Heart right ventricle (tissue), 16 donors: ENCODE measurements at regions of chr13 and their contacts with region 1.

Region 1: GRCh38 chr13:62626771-62627170 is 1211.1 kb upstream of the PCDH20 start:
- DNase-seq: no peak
- ATAC-seq: no peak
- H3K4me3 ChIP-seq: no peak overlapping the region
- H3K27ac ChIP-seq: no peak overlapping the region
- H3K4me1 ChIP-seq: no peaks in the 10 kb centered on the region
- H3K27me3 ChIP-seq: no peaks in the 10 kb centered on the region
- CTCF ChIP-seq: no peak

Region 2: GRCh38 chr13:62280590-62280989 is 346.2 kb before region 1 on chr13:
- intact Hi-C with region 1: no loop called
- DNase-seq: no peak
- ATAC-seq: no peak
- H3K4me3 ChIP-seq: no peak overlapping the region
- H3K27ac ChIP-seq: no peak overlapping the region
- H3K4me1 ChIP-seq: no peaks in the 10 kb centered on the region
- H3K27me3 ChIP-seq: no peaks in the 10 kb centered on the region
- CTCF ChIP-seq: no peak

Region 3: DNA sequence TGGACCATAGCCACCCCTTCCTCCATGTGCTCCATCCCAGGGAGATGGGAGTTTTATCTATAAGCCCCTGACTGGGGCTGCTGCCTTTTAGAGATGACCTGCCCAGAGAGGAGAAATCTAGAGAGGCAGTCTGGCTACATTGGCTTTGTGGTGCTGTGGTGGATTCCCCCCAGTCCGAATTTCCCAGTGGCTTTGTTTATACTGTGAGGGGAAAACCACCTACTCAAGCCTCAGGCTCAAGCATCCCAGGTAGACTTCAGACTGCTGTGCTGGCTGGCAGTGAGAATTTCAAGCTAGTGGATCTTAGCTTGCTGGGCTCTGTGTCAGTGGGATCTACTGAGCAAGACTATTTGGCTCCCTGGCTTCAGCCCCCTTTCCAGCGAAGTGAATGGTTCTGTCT is 15.4 kb before region 1 on chr13:
- intact Hi-C with region 1: loop called in 1 of 10 experiments (anchors 1 kb)
- DNase-seq: no peak
- ATAC-seq: no peak
- H3K4me3 ChIP-seq: no peak overlapping the region
- H3K27ac ChIP-seq: no peak overlapping the region
- H3K4me1 ChIP-seq: no peaks in the 10 kb centered on the region
- H3K27me3 ChIP-seq: no peaks in the 10 kb centered on the region
- CTCF ChIP-seq: no peak